Mammary epithelial cell (primary cell): ENCODE measurements at regions of chr10 and their contacts with region 1.

Region 1: GRCh38 chr10:84755311-84755710 is 426.9 kb downstream of the CCSER2 start:
- DNase-seq: no peak
- H3K4me3 ChIP-seq: no peak overlapping the region
- H3K27ac ChIP-seq: no peak overlapping the region
- H3K4me1 ChIP-seq: no peaks in the 10 kb centered on the region
- H3K27me3 ChIP-seq: no peaks in the 10 kb centered on the region
- CTCF ChIP-seq: no peak

Region 2: GRCh38 chr10:84654671-84655070 is 100.6 kb before region 1 on chr10:
- CTCF ChIA-PET with region 1: no interaction called
- dilution Hi-C with region 1: loop called (anchors 5 kb)
- in situ Hi-C with region 1: no loop called
- intact Hi-C with region 1: no loop called
- DNase-seq: peak; percentile 76
- H3K4me3 ChIP-seq: no peak overlapping the region
- H3K27ac ChIP-seq: no peak overlapping the region
- H3K4me1 ChIP-seq: peaks cover 3% of the 10 kb centered on the region
- H3K27me3 ChIP-seq: no peaks in the 10 kb centered on the region
- CTCF ChIP-seq: no peak